Naive thymus-derived CD4-positive, alpha-beta T cell (primary cell): ENCODE measurements at regions of chr18 and their contacts with region 1.

Region 1: GRCh38 chr18:10560450-10561045 is 34.7 kb downstream of the NAPG start:
- DNase-seq: peak; percentile 8 to 58 (median 42)
- ATAC-seq: peak; percentile 67
- H3K4me3 ChIP-seq: no peak overlapping the region
- H3K4me3 Mint-ChIP-seq: peak overlapping the region in 8 of 10 donors; percentile 24 to 79 (median 50)
- H3K27ac ChIP-seq: no peak overlapping the region
- H3K27ac Mint-ChIP-seq: peak overlapping the region in 3 of 9 donors; percentile 27 to 64 (median 54)
- H3K4me1 ChIP-seq: no peaks in the 10 kb centered on the region
- H3K4me1 Mint-ChIP-seq: peaks cover 6 to 16% (median 13%) of the 10 kb centered on the region in 7 donors
- H3K27me3 ChIP-seq: no peaks in the 10 kb centered on the region
- H3K27me3 Mint-ChIP-seq: no peaks in the 10 kb centered on the region

Region 2: DNA sequence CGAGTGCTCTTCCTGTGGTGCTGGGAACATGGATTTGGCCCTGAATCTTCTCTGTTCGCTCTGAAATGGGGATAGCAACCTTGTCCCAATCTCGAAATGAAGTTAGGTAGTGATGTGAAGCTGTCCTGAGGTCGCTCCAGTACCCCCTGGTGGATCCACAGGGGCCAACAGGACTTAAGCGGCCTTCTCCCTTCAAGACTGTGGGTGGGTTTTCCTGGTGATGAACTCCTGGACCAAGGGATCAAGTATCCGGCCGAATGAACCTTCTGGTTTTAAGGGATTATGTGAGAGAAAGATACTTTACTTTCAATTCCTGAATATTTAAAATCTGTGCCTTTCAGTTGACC is 121.8 kb after region 1 on chr18:
- CTCF ChIA-PET with region 1: no interaction called
- POLR2A ChIA-PET with region 1: no interaction called
- intact Hi-C with region 1: loop called in 1 of 2 experiments (anchors 2 kb)
- DNase-seq: no peak
- ATAC-seq: no peak
- H3K4me3 ChIP-seq: no peak overlapping the region
- H3K4me3 Mint-ChIP-seq: no peak overlapping the region
- H3K27ac ChIP-seq: no peak overlapping the region
- H3K27ac Mint-ChIP-seq: no peak overlapping the region
- H3K4me1 ChIP-seq: no peaks in the 10 kb centered on the region
- H3K4me1 Mint-ChIP-seq: no peaks in the 10 kb centered on the region
- H3K27me3 ChIP-seq: no peaks in the 10 kb centered on the region
- H3K27me3 Mint-ChIP-seq: peaks cover 0 to 7% (median 4%) of the 10 kb centered on the region in 5 donors

Region 3: DNA sequence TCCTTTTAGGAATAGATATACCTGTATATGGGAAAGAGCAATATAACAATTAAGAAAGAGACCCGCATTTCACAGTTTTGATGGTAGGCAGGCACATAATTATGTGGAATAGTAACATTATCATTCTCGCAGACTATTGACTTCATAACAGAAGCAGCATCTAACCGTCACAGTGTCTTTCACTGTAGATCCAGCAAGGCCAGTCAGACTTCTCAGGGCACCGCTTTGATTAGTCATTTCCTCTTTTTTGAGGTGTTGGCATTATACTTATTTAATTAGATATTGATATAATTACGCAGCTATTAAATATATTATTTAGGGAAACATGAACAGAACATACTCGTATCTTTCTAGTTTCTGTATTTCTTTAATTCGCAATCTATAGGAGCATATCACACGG is 141.7 kb after region 1 on chr18:
- CTCF ChIA-PET with region 1: no interaction called
- POLR2A ChIA-PET with region 1: no interaction called
- intact Hi-C with region 1: no loop called
- DNase-seq: no peak
- ATAC-seq: no peak
- H3K4me3 ChIP-seq: no peak overlapping the region
- H3K4me3 Mint-ChIP-seq: no peak overlapping the region
- H3K27ac ChIP-seq: no peak overlapping the region
- H3K27ac Mint-ChIP-seq: no peak overlapping the region
- H3K4me1 ChIP-seq: no peaks in the 10 kb centered on the region
- H3K4me1 Mint-ChIP-seq: no peaks in the 10 kb centered on the region
- H3K27me3 ChIP-seq: no peaks in the 10 kb centered on the region
- H3K27me3 Mint-ChIP-seq: peaks cover 0 to 9% (median 5%) of the 10 kb centered on the region in 5 donors

Region 4: GRCh38 chr18:10787293-10787901 is 226.8 kb after region 1 on chr18:
- CTCF ChIA-PET with region 1: no interaction called
- POLR2A ChIA-PET with region 1: no interaction called
- intact Hi-C with region 1: loop called (anchors 2 to 5 kb)
- DNase-seq: peak; percentile 54 to 85 (median 75)
- ATAC-seq: peak; percentile 96
- H3K4me3 ChIP-seq: no peak overlapping the region
- H3K4me3 Mint-ChIP-seq: peak overlapping the region in 4 of 10 donors; percentile 7 to 33 (median 14)
- H3K27ac ChIP-seq: no peak overlapping the region
- H3K27ac Mint-ChIP-seq: peak overlapping the region in 2 of 9 donors; percentile 25 to 64
- H3K4me1 ChIP-seq: no peaks in the 10 kb centered on the region
- H3K4me1 Mint-ChIP-seq: peaks cover 0 to 9% (median 5%) of the 10 kb centered on the region in 7 donors
- H3K27me3 ChIP-seq: no peaks in the 10 kb centered on the region
- H3K27me3 Mint-ChIP-seq: peaks cover 3 to 65% (median 27%) of the 10 kb centered on the region in 5 donors

Region 5: DNA sequence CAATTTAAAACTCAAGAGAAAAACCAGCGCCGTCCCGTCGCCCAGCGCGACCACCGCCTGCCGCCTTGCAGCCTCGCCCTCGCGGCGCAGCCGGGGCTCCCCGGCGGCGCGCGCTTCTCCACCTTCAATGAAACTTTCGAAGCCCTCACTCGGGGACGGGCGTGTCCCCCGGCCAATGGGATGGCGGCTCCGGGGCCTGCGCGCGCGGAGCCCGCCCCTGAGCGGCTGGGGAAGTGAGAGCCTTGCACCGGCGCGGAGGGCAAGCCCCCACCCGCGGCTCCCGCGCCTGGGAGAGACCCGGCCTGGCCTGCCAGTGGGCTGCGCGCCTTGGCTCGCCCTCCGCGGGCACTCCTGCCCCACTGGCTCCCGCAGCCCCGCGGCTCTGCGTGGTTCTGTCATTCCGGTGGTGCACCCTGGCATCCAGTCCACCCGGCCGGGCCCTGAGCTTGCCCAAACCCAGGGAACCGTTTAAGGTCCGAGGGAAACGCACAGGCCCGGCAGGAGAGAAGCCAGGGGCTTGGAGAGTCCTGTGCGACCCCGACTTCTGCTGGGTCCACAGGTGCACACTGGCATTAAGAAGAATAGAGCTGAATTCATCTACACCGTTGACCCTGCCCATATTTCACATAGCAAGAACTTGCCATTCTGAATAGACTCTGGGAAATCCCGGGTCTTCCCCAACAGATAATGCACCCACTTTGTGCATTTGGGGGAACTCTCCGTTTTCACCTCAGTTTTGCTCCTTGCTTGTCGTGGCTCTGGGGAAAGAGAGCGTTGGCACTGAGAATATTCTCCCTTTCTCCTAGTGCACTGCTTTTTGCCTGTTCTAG is 589.1 kb after region 1 on chr18 and contains the start of gene PIEZO2:
- CTCF ChIA-PET with region 1: no interaction called
- POLR2A ChIA-PET with region 1: no interaction called
- intact Hi-C with region 1: loop called in 1 of 2 experiments (anchors 2 kb)
- DNase-seq: no peak
- ATAC-seq: peak; percentile 63
- H3K4me3 ChIP-seq: no peak within 1 kb of the TSS
- H3K4me3 Mint-ChIP-seq: peak within 1 kb of the TSS in 2 of 10 donors; percentile 15 to 36
- H3K27ac ChIP-seq: no peak within 1 kb of the TSS
- H3K27ac Mint-ChIP-seq: no peak within 1 kb of the TSS
- H3K4me1 ChIP-seq: no peaks in the 10 kb centered on the region
- H3K4me1 Mint-ChIP-seq: peaks cover 0 to 9% (median 5%) of the 10 kb centered on the region in 7 donors
- H3K27me3 ChIP-seq: no peaks in the 10 kb centered on the region
- H3K27me3 Mint-ChIP-seq: peaks cover 32 to 54% (median 42%) of the 10 kb centered on the region in 5 donors
- total RNA-seq, gene PIEZO2: not detected

Region 6: DNA sequence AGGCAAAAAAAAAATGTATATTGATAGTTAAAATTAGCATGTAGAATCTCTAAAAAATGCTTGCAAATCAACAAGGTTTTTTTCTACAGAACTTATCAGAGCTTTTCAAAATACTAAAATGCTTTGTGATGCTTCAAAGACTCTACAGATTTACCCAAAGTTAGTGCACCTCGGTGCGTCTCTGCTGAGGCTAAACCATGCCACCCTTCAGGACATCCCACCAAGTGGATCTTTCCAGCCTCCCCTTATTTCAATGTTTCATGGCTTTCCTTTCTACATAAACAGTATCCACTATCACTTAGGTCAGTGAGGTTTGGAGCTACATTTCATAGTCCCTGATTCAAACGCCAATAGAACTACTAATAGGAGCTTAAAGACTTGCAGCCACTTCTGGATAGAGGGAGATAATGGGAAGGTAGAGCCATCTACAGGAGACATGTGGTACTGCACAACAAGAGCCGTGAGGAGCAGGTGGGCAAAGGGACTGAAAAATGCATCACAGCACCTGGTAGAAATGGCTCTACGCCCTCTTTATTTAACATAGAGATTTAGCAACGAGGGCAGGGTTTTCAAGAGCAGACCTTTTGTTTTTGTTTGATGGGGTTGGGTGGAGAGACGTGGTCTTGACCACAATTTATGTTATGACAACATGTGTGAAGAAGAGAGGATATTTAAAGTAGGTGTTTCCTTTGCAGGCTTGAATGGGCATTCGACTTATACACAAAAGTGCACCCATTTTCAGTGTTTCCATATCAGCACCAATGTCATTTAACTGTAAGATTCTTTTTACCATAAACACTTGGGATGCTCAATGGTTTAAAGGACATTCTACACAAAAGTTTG is 992.8 kb after region 1 on chr18:
- CTCF ChIA-PET with region 1: no interaction called
- POLR2A ChIA-PET with region 1: no interaction called
- intact Hi-C with region 1: loop called in 1 of 2 experiments (anchors 1 kb)
- DNase-seq: peak in 5 of 9 donors; percentile 7 to 34 (median 25)
- ATAC-seq: peak; percentile 68
- H3K4me3 ChIP-seq: no peak overlapping the region
- H3K4me3 Mint-ChIP-seq: no peak overlapping the region
- H3K27ac ChIP-seq: no peak overlapping the region
- H3K27ac Mint-ChIP-seq: no peak overlapping the region
- H3K4me1 ChIP-seq: no peaks in the 10 kb centered on the region
- H3K4me1 Mint-ChIP-seq: peaks cover 0 to 5% (median 0%) of the 10 kb centered on the region in 7 donors
- H3K27me3 ChIP-seq: peaks cover under 1 to 4% of the 10 kb centered on the region in 2 donors
- H3K27me3 Mint-ChIP-seq: peaks cover 0 to 17% (median 9%) of the 10 kb centered on the region in 5 donors

Region 7: GRCh38 chr18:11872479-11873136 is 1312.1 kb after region 1 on chr18:
- CTCF ChIA-PET with region 1: no interaction called
- POLR2A ChIA-PET with region 1: no interaction called
- intact Hi-C with region 1: loop called in 1 of 2 experiments (anchors 2 kb)
- DNase-seq: peak in 3 of 9 donors; percentile 8 to 22 (median 9)
- ATAC-seq: peak; percentile 54
- H3K4me3 ChIP-seq: no peak overlapping the region
- H3K4me3 Mint-ChIP-seq: no peak overlapping the region
- H3K27ac ChIP-seq: no peak overlapping the region
- H3K27ac Mint-ChIP-seq: no peak overlapping the region
- H3K4me1 ChIP-seq: no peaks in the 10 kb centered on the region
- H3K4me1 Mint-ChIP-seq: no peaks in the 10 kb centered on the region
- H3K27me3 ChIP-seq: no peaks in the 10 kb centered on the region
- H3K27me3 Mint-ChIP-seq: peaks cover 0 to 13% (median 0%) of the 10 kb centered on the region in 5 donors

Region 8: DNA sequence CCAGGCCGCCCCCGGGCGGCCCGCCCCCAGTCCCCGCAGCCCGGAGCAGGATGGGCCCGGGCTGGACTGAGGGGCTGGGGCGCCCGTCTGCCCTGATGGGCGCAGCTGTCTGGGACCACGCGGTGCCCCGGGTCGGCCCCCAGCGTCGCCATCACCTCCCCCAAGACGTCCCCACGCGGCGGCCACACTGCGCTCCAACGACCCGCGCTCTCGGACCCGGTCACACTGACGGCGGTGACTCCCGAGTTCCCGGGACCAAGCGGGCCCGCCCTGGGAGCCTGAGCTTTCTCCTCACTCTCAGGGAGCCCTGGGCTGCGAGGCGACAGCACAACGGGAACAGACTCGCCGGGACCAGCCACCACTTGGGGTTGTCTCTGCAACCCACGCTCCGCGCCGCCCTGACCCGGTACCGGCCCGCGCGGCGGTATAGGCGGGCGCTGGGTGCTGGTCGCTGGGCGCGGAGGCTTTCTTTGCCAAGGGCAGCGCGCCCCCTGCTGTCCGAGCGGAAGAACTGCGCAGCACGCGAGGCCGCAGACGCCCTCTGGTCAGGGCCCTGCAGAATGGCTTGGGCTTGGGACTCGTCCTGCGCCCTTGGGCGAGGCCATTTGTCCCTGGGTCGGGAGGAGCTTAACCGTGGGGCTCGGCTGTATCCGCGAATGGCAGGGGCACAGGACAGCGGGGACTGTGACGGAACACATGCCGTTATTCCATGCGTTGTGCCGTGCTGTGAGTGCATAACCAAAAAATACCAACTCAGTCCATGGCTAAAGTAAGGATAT is 1478.3 kb after region 1 on chr18:
- CTCF ChIA-PET with region 1: no interaction called
- POLR2A ChIA-PET with region 1: no interaction called
- intact Hi-C with region 1: loop called in 1 of 2 experiments (anchors 2 kb)
- DNase-seq: peak; percentile 41 to 84 (median 68)
- ATAC-seq: peak; percentile 95
- H3K4me3 ChIP-seq: peak overlapping the region; percentile 52
- H3K4me3 Mint-ChIP-seq: peak overlapping the region; percentile 59 to 79 (median 72)
- H3K27ac ChIP-seq: no peak overlapping the region
- H3K27ac Mint-ChIP-seq: no peak overlapping the region
- H3K4me1 ChIP-seq: no peaks in the 10 kb centered on the region
- H3K4me1 Mint-ChIP-seq: peaks cover 0 to 19% (median 0%) of the 10 kb centered on the region in 7 donors
- H3K27me3 ChIP-seq: peaks cover 0 to 3% of the 10 kb centered on the region in 2 donors
- H3K27me3 Mint-ChIP-seq: peaks cover 10 to 21% (median 14%) of the 10 kb centered on the region in 5 donors